HAP-1 (cell line): ENCODE measurements at regions of chr5 and their contacts with region 1.

Region 1: DNA sequence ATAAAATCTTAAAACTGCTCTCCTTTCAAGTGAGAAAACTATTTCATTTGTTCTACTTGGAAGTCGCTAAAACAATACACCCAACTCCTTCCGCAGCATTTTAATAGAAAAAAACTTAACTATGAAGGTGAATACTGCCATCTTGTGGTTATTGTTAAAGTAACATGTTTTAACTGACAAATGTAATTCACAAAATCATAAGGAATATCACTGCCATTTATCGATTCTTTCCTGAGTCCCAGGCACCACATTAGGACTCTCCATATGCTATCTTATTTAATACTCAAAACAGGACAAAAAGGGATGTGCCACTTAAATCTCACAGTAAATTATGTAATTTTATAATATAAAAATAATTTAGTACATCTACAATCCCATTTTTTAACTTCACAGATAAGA is 130.5 kb upstream of the ITGA1 start:
- DNase-seq: peak in 1 of 2 experiments; percentile 49
- H3K4me3 ChIP-seq: no peak overlapping the region
- H3K4me1 ChIP-seq: no peaks in the 10 kb centered on the region
- H3K27me3 ChIP-seq: no peaks in the 10 kb centered on the region

Region 2: GRCh38 chr5:52356311-52356918 is 300.8 kb before region 1 on chr5:
- in situ Hi-C with region 1: loop called (anchors 25 kb)
- DNase-seq: peak in 1 of 2 experiments; percentile 53
- H3K4me3 ChIP-seq: no peak overlapping the region
- H3K4me1 ChIP-seq: peaks cover 10% of the 10 kb centered on the region
- H3K27me3 ChIP-seq: no peaks in the 10 kb centered on the region